ENCODE measurements at regions of chr4 and their contacts with region 1.

Region 1: DNA sequence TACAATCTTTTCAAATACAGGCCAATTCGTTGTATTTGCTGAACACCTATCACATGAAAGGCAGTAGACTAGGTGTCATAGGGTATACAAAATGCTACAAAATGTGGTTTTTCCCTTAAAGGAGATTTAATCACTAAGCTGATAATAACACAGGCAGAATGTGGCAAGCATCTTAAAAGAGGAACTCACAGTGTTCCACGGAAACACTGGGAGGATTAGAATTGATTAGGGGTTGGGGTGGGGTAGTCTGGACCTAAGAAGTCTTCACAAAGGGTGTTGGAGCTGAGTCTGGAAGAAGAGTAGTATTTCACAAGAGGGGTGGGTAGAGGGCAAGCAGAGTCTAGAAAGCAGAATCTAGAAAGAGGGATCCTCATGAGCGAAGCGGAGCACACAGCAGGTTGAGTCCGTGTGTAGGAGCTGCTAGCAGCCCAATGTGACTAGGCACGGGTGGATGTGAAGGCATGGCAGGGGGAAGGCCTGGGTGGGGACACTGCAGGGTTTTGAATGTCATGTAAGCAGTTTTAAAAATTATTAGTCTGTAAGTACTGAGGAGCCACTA is 123.6 kb downstream of the MGST2 start:
- H3K4me3 Mint-ChIP-seq: no peak overlapping the region
- H3K27ac Mint-ChIP-seq: no peak overlapping the region
- H3K4me1 Mint-ChIP-seq: peaks cover 30% of the 10 kb centered on the region
- H3K27me3 Mint-ChIP-seq: no peaks in the 10 kb centered on the region

Region 2: GRCh38 chr4:139841464-139842246 is 52.5 kb after region 1 on chr4:
- intact Hi-C with region 1: loop called (anchors 2 kb)
- H3K4me3 Mint-ChIP-seq: no peak overlapping the region
- H3K27ac Mint-ChIP-seq: no peak overlapping the region
- H3K4me1 Mint-ChIP-seq: peaks cover 50% of the 10 kb centered on the region
- H3K27me3 Mint-ChIP-seq: no peaks in the 10 kb centered on the region

Measured in dendritic cell treated with granulocyte-macrophage colony-stimulating factor and Interleukin-4, amounts not matched to agents 40 ng/mL and 50 ng/mL, for 4 days (primary cell).